Sigmoid colon (tissue), 7 donors: ENCODE measurements at regions of chr17 and their contacts with region 1.

Region 1: GRCh38 chr17:28598799-28599310 is at the start of gene SPAG5:
- DNase-seq: peak; percentile 97
- H3K4me3 ChIP-seq: peak within 1 kb of the TSS; percentile 52 to 63 (median 55)
- H3K27ac ChIP-seq: peak within 1 kb of the TSS; percentile 85 to 92 (median 89)
- H3K4me1 ChIP-seq: peaks cover 2 to 19% (median 14%) of the 10 kb centered on the region in 4 donors
- H3K27me3 ChIP-seq: no peaks in the 10 kb centered on the region
- CTCF ChIP-seq: no peak
- EP300 ChIP-seq: no peak
- POLR2A ChIP-seq: peak; percentile 84 to 86
- total RNA-seq, gene SPAG5: 0.33 to 3.9 (median 1.6) TPM

Region 2: GRCh38 chr17:27733773-27734172 is 865.1 kb before region 1 on chr17:
- intact Hi-C with region 1: no loop called
- DNase-seq: no peak
- H3K4me3 ChIP-seq: no peak overlapping the region
- H3K27ac ChIP-seq: no peak overlapping the region
- H3K4me1 ChIP-seq: no peaks in the 10 kb centered on the region
- H3K27me3 ChIP-seq: no peaks in the 10 kb centered on the region
- CTCF ChIP-seq: no peak
- EP300 ChIP-seq: no peak
- POLR2A ChIP-seq: no peak

Region 3: GRCh38 chr17:28571255-28572122 is 27.4 kb before region 1 on chr17 and contains the start of gene PIGS:
- intact Hi-C with region 1: loop called (anchors 2 kb)
- DNase-seq: peak; percentile 97
- H3K4me3 ChIP-seq: peak within 1 kb of the TSS; percentile 94 to 98 (median 96)
- H3K27ac ChIP-seq: peak within 1 kb of the TSS; percentile 72 to 85 (median 83)
- H3K4me1 ChIP-seq: peaks cover 0 to 24% (median 20%) of the 10 kb centered on the region in 4 donors
- H3K27me3 ChIP-seq: no peaks in the 10 kb centered on the region
- CTCF ChIP-seq: no peak
- EP300 ChIP-seq: no peak
- POLR2A ChIP-seq: peak; percentile 69 to 81
- total RNA-seq, gene PIGS: 17.2 to 42.5 (median 36.7) TPM